Activated CD4-positive, alpha-beta memory T cell treated with anti-CD3 and anti-CD28 coated beads for 36 hours (primary cell): ENCODE measurements at regions of chr2 and their contacts with region 1.

Region 1: DNA sequence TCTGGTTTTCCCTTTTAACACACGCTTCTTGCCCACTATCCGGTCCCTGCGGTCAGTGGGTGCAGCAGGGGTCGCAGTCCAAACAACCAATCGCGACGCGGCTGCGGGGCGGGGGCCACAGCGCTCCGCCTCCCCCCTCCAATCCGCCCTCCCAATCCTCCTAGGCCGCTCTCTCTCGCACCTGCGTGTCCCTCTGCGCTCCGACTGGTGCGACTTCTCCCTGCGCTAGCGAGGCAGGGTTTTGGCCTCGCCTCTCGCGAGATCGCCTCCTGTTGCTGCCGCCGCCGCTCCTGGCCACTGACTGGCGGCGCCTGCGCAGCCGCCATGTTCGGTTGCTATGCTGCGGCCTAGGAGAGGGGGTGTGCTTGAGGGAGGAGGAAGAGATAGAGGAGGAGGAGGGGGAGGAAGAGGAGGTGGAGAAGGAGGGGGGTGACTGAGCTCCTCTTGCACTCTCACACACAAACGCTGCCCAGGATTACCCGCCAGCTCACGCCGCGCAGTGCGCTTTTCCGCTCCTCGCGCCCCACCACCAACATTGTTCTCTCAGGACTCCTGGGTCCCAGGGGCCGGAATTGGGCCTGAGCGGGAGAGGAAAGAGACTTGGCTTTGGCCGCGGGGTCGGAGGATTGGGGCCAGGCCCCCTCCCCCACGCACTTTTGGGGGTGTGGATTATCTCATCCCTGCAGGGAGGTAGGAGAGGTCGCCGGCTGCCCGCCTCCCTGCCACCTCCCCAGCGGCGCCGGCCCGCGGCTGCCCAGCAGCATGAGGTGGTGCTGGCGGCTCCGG is at the start of gene PTPN4:
- DNase-seq: peak; percentile 98
- H3K4me3 Mint-ChIP-seq: peak within 1 kb of the TSS; percentile 89
- H3K27ac Mint-ChIP-seq: peak within 1 kb of the TSS; percentile 93
- H3K4me1 Mint-ChIP-seq: peaks cover 48% of the 10 kb centered on the region
- H3K27me3 Mint-ChIP-seq: no peaks in the 10 kb centered on the region
- total RNA-seq, gene PTPN4: 29.4 to 31.6 TPM

Region 2: GRCh38 chr2:119678998-119679710 is 80.5 kb before region 1 on chr2 and contains the start of gene TMEM177:
- CTCF ChIA-PET with region 1: interaction called, 3 read pairs
- POLR2A ChIA-PET with region 1: no interaction called
- intact Hi-C with region 1: loop called (anchors 1 kb)
- DNase-seq: peak; percentile 93
- H3K4me3 Mint-ChIP-seq: peak within 1 kb of the TSS; percentile 86
- H3K27ac Mint-ChIP-seq: peak within 1 kb of the TSS; percentile 77
- H3K4me1 Mint-ChIP-seq: peaks cover 34% of the 10 kb centered on the region
- H3K27me3 Mint-ChIP-seq: no peaks in the 10 kb centered on the region
- total RNA-seq, gene TMEM177: 13.5 to 14.9 TPM

Region 3: GRCh38 chr2:119772128-119772527 is 12.5 kb after region 1 on chr2:
- CTCF ChIA-PET with region 1: no interaction called
- POLR2A ChIA-PET with region 1: interaction called, 4 read pairs
- intact Hi-C with region 1: loop called (anchors 1 kb)
- DNase-seq: no peak
- H3K4me3 Mint-ChIP-seq: no peak overlapping the region
- H3K27ac Mint-ChIP-seq: no peak overlapping the region
- H3K4me1 Mint-ChIP-seq: peaks cover 27% of the 10 kb centered on the region
- H3K27me3 Mint-ChIP-seq: no peaks in the 10 kb centered on the region

Region 4: DNA sequence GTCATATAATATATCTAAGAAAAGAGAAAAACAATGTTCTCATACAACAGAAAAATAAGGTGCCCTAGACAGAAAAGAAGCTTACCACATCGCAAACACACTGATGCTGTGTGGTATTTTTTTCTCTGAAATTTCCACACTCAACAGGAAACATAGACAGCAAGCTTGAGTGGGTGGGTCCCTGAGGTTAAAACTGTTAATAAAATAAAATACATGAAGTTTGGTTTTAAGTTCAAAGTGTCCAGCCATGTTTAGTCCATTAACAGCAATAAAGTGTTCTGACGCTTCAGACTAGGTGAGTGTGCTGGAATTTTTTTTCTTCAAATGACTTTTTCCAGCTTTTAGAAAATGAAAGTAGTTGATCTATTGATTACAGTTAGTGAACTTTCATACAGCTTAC is 169.9 kb after region 1 on chr2:
- CTCF ChIA-PET with region 1: interaction called, 5 read pairs
- POLR2A ChIA-PET with region 1: no interaction called
- intact Hi-C with region 1: loop called (anchors 5 kb)
- DNase-seq: no peak
- H3K4me3 Mint-ChIP-seq: peak overlapping the region; percentile 65
- H3K27ac Mint-ChIP-seq: peak overlapping the region; percentile 71
- H3K4me1 Mint-ChIP-seq: peaks cover 65% of the 10 kb centered on the region
- H3K27me3 Mint-ChIP-seq: no peaks in the 10 kb centered on the region

Region 5: GRCh38 chr2:120223034-120223912 is 463.6 kb after region 1 on chr2 and contains the start of gene TMEM185B:
- CTCF ChIA-PET with region 1: no interaction called
- POLR2A ChIA-PET with region 1: no interaction called
- intact Hi-C with region 1: loop called (anchors 1 kb)
- DNase-seq: peak; percentile 95
- H3K4me3 Mint-ChIP-seq: peak within 1 kb of the TSS; percentile 81
- H3K27ac Mint-ChIP-seq: peak within 1 kb of the TSS; percentile 83
- H3K4me1 Mint-ChIP-seq: peaks cover 52% of the 10 kb centered on the region
- H3K27me3 Mint-ChIP-seq: no peaks in the 10 kb centered on the region
- total RNA-seq, gene TMEM185B: 19.4 to 19.7 TPM

Region 6: GRCh38 chr2:120312861-120313694 is 553.4 kb after region 1 on chr2:
- CTCF ChIA-PET with region 1: no interaction called
- POLR2A ChIA-PET with region 1: no interaction called
- intact Hi-C with region 1: loop called (anchors 5 kb)
- DNase-seq: peak; percentile 87
- H3K4me3 Mint-ChIP-seq: peak overlapping the region; percentile 56
- H3K27ac Mint-ChIP-seq: no peak overlapping the region
- H3K4me1 Mint-ChIP-seq: peaks cover 22% of the 10 kb centered on the region
- H3K27me3 Mint-ChIP-seq: no peaks in the 10 kb centered on the region